Aorta (tissue), 5 donors: ENCODE measurements at regions of chr10 and their contacts with region 1.

Region 1: DNA sequence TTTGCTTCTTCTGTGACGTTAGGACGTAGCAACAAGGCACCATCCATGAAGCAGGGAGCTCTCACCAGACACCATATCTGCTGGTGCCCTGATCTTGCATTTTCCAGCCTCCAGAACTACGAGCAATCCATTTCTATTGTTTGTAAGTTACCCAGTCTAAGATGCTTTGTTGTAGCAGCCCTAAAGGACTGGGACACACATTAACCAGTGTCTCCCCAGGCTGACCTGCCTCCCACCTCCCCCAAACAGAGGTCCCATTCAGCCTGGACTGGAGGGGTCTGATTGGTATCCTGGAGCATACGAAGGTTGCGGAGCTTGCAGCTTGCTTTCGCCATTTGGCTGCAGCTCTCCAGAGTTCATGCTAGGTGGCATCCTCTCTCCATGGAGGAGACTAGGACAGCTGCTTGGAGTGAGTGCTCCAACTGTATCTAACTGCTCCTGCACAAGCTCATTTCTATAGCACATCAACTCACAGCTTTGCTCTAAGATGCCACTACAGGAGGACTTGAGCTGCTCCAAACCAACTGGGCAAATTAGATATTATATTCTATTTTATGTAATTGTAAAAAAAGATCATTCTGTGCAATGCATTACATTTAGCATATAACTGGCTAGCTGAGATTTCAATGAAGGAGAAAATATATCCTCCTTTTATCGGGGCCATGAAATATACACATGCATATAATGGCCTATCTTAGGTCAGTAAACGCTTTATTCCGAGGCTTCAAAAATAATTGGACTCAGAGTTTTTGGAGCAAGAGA is 8.0 kb upstream of the GRK5 start:
- DNase-seq: peak; percentile 69
- ATAC-seq: peak; percentile 91
- H3K4me3 ChIP-seq: no peak overlapping the region
- H3K27ac ChIP-seq: no peak overlapping the region
- H3K4me1 ChIP-seq: no peaks in the 10 kb centered on the region
- H3K27me3 ChIP-seq: no peaks in the 10 kb centered on the region

Region 2: DNA sequence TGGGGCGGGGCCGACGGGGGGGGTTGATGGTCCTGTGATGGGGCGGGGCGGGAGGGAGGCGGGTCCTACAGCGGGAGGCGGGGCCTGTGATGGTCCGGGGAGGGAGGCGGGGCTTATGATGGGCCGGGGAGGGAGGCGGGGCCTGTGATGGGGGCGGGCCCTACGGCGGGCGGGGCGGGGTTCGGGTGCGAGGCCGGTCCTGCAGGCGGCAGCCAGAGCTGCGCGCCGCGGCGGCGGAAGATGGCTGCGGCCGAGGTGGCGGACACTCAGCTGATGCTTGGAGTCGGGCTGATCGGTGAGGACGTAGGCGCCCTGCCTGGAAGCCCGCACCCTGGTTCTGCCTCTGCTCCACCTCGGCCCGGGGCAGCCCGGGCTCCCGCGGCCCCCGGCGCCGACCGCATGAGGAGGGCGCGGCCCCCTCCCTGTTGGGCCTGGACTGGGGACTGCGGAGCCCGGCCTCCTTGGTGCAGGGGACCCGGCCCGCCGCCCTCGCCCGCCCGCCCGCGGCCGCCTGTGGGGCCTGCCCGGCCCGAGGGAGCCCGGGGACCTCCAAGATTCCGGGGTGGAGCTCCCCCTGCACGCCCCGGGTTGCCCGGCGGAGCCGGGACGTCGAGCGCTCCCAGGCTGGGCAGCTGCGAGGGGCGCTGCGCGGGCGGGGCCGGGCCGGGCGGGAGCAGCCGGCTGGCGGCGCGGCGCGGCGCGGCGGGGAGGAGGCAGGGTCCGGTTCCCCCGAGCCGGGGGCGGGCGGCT is 95.3 kb before region 1 on chr10 and contains the start of gene DENND10:
- intact Hi-C with region 1: no loop called
- DNase-seq: peak; percentile 83 to 95
- ATAC-seq: peak; percentile 95
- H3K4me3 ChIP-seq: peak within 1 kb of the TSS; percentile 43 to 80
- H3K27ac ChIP-seq: no peak within 1 kb of the TSS
- H3K4me1 ChIP-seq: no peaks in the 10 kb centered on the region
- H3K27me3 ChIP-seq: peaks cover 0 to 2% of the 10 kb centered on the region in 2 donors
- total RNA-seq, gene DENND10: 18.5 to 28.8 TPM

Region 3: GRCh38 chr10:119445311-119445934 is 246.0 kb after region 1 on chr10:
- intact Hi-C with region 1: loop called (anchors 2 to 5 kb)
- DNase-seq: peak; percentile 90 to 94
- ATAC-seq: peak; percentile 68
- H3K4me3 ChIP-seq: no peak overlapping the region
- H3K27ac ChIP-seq: no peak overlapping the region
- H3K4me1 ChIP-seq: peaks cover 0 to 4% of the 10 kb centered on the region in 2 donors
- H3K27me3 ChIP-seq: no peaks in the 10 kb centered on the region

Region 4: DNA sequence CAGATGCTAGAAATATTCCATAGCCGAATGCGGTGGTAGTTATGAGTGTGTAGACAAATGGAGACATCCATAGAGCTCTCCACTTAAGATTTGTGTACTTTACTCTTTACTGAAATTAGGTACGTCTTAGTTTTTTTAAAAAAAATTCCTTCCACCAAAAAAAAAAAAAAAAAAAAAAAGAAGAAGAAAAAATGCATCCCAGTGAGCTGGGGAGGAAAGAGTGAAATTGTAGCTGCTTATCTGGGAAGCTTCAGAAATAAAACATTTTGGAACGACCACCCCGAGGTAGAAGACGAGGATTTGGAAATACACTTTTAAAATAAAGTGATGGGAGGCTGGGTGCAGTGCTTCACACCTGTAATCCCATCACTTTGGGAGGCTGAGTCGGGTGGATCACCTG is 289.3 kb after region 1 on chr10:
- intact Hi-C with region 1: loop called (anchors 1 to 5 kb)
- DNase-seq: no peak
- ATAC-seq: no peak
- H3K4me3 ChIP-seq: no peak overlapping the region
- H3K27ac ChIP-seq: no peak overlapping the region
- H3K4me1 ChIP-seq: no peaks in the 10 kb centered on the region
- H3K27me3 ChIP-seq: no peaks in the 10 kb centered on the region

Region 5: GRCh38 chr10:119494236-119495060 is 295.0 kb after region 1 on chr10:
- intact Hi-C with region 1: loop called in 1 of 2 experiments (anchors 5 kb)
- DNase-seq: no peak
- ATAC-seq: peak; percentile 20
- H3K4me3 ChIP-seq: no peak overlapping the region
- H3K27ac ChIP-seq: no peak overlapping the region
- H3K4me1 ChIP-seq: no peaks in the 10 kb centered on the region
- H3K27me3 ChIP-seq: no peaks in the 10 kb centered on the region

Region 6: GRCh38 chr10:119542988-119543813 is 343.8 kb after region 1 on chr10:
- intact Hi-C with region 1: loop called in 1 of 2 experiments (anchors 5 kb)
- DNase-seq: peak; percentile 78 to 88
- ATAC-seq: peak; percentile 75
- H3K4me3 ChIP-seq: peak overlapping the region; percentile 64 to 79
- H3K27ac ChIP-seq: no peak overlapping the region
- H3K4me1 ChIP-seq: peaks cover 0 to 3% of the 10 kb centered on the region in 2 donors
- H3K27me3 ChIP-seq: no peaks in the 10 kb centered on the region